PC-9 (cell line): ENCODE measurements at regions of chr1 and their contacts with region 1.

Region 1: GRCh38 chr1:166588741-166589140 is 250.5 kb upstream of the POGK start:
- DNase-seq: no peak
- H3K4me3 ChIP-seq: no peak overlapping the region
- H3K27ac ChIP-seq: no peak overlapping the region
- H3K4me1 ChIP-seq: no peaks in the 10 kb centered on the region
- H3K27me3 ChIP-seq: peaks cover under 1% of the 10 kb centered on the region; the same call in 1 of the 2 replicates
- CTCF ChIP-seq: no peak

Region 2: DNA sequence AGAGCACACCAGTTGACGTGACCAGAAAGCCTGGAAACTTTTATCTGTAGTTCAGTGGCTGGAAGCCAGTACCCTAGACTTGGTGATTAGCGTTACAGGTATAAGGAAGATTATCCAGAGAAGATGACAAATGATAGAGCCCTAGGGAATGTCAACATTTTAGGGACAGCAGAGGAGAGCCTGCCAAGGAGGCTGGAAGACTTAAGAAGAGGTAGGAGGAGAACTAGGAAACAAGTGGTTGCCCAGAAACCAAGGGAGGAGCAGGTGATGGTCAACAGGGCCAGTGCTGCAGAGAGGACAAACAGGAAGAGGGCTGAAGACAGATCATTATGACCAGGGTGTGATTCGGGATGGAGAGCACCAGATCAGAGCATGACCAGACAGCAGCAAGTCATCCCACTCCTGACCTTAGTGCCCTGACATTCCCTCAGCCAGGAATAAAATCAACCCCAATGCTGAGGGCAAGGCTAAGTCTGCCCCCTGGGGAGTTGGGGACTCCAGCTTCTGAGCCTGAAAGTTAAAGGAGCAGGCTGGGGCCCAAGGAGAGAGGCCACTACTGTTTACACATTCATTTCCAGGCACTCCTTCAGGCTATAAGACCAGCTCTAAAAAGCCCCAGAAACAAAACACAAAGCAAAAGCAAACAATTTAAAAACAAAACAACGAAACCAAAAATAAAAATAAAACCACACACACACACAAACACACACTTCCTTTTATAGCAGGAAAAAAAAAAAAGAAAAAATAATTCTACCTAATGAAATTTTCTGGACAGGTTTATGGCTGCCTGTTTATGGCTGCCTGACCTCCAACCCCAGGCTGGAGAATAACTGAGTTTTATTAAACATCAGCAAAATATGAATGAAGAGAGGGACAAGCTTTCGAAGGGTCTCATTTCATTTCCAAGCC is 1093.5 kb before region 1 on chr1:
- CTCF ChIA-PET with region 1: no interaction called
- POLR2A ChIA-PET with region 1: interaction called, 10 read pairs
- intact Hi-C with region 1: no loop called
- DNase-seq: no peak
- H3K4me3 ChIP-seq: no peak overlapping the region
- H3K27ac ChIP-seq: no peak overlapping the region
- H3K4me1 ChIP-seq: no peaks in the 10 kb centered on the region
- H3K27me3 ChIP-seq: no peaks in the 10 kb centered on the region
- CTCF ChIP-seq: no peak

Region 3: DNA sequence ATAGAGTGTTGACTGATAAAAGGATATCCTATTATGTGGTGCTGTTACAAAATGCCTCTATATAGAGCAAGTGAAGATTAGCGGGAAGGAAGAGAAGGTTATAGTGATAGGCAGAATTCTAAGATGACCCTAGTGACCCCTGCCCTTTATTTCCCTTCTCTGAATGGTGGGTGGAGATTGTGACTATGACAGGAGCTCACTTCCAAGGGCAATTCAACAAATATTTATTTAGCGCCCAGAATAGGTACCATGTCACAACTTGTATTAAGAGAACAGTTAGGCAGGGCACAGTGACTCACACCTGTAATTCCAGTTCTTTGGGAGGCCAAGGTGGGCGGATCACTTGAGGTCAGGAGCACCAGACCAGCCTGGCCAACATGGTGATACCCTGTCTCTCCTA is 14.5 kb after region 1 on chr1:
- CTCF ChIA-PET with region 1: no interaction called
- POLR2A ChIA-PET with region 1: interaction called, 12 read pairs
- intact Hi-C with region 1: no loop called
- DNase-seq: peak; percentile 58 to 96
- H3K4me3 ChIP-seq: no peak overlapping the region
- H3K27ac ChIP-seq: peak overlapping the region; percentile 22
- H3K4me1 ChIP-seq: peaks cover 36% of the 10 kb centered on the region
- H3K27me3 ChIP-seq: no peaks in the 10 kb centered on the region
- CTCF ChIP-seq: no peak